CD4-positive, alpha-beta memory T cell (primary cell): ENCODE measurements at regions of chr19 and their contacts with region 1.

Region 1: DNA sequence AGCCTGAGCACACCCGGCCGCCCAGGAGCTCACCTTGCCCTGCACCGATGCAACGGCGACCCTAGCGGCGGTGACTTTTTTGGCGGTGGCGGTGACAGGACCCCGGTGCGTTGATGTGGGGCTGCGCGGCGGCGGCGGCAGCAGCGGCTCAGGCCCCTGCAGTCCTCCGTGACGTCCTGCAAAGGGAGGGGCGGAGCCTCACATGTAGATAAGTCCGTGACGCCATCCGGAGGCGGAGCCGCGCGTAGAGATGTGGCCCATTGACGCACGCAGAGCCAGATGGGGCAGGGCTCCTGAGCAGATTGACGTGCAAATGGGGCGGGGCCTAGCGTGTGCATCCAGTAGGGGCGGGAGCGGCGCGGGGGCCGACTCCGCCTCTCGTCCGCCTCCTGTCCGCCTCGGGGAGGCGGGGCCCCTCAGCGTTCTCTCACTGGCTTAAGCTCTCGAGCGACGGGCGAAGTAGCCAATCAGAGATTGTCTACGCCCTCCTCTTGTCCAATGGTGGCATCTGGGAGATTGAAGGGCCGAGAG is at the start of gene RAB3A:
- DNase-seq: peak; percentile 98 to 100 (median 100)
- H3K4me3 ChIP-seq: peak within 1 kb of the TSS; percentile 84 to 93
- H3K4me3 Mint-ChIP-seq: peak within 1 kb of the TSS; percentile 91 to 98 (median 96)
- H3K27ac ChIP-seq: peak within 1 kb of the TSS; percentile 63
- H3K27ac Mint-ChIP-seq: peak within 1 kb of the TSS; percentile 79 to 98 (median 98)
- H3K4me1 ChIP-seq: peaks cover 23% of the 10 kb centered on the region
- H3K4me1 Mint-ChIP-seq: peaks cover 13 to 33% (median 21%) of the 10 kb centered on the region in 4 donors
- H3K27me3 ChIP-seq: no peaks in the 10 kb centered on the region
- H3K27me3 Mint-ChIP-seq: peaks cover 0 to 1% of the 10 kb centered on the region in 2 donors
- total RNA-seq, gene RAB3A: 4.7 to 4.8 TPM

Region 2: GRCh38 chr19:18192673-18193387 is 11.1 kb before region 1 on chr19 and contains the start of gene MPV17L2:
- CTCF ChIA-PET with region 1: interaction called, 27 read pairs
- POLR2A ChIA-PET with region 1: interaction called, 78 read pairs
- intact Hi-C with region 1: loop called (anchors 1 kb)
- DNase-seq: peak; percentile 98 to 100 (median 99)
- H3K4me3 ChIP-seq: peak within 1 kb of the TSS; percentile 63 to 83
- H3K4me3 Mint-ChIP-seq: peak within 1 kb of the TSS; percentile 87 to 96 (median 92)
- H3K27ac ChIP-seq: peak within 1 kb of the TSS; percentile 73
- H3K27ac Mint-ChIP-seq: peak within 1 kb of the TSS; percentile 89 to 98 (median 96)
- H3K4me1 ChIP-seq: peaks cover 22% of the 10 kb centered on the region
- H3K4me1 Mint-ChIP-seq: peaks cover 11 to 26% (median 20%) of the 10 kb centered on the region in 4 donors
- H3K27me3 ChIP-seq: no peaks in the 10 kb centered on the region
- H3K27me3 Mint-ChIP-seq: no peaks in the 10 kb centered on the region
- total RNA-seq, gene MPV17L2: 7.6 to 7.8 TPM

Region 3: GRCh38 chr19:18224525-18225354 is 20.8 kb after region 1 on chr19:
- CTCF ChIA-PET with region 1: interaction called, 6 read pairs
- POLR2A ChIA-PET with region 1: interaction called, 17 read pairs
- intact Hi-C with region 1: no loop called
- DNase-seq: peak; percentile 79 to 83 (median 81)
- H3K4me3 ChIP-seq: peak overlapping the region; percentile 28 to 45
- H3K4me3 Mint-ChIP-seq: peak overlapping the region; percentile 83 to 91 (median 90)
- H3K27ac ChIP-seq: no peak overlapping the region
- H3K27ac Mint-ChIP-seq: peak overlapping the region in 3 of 7 donors; percentile 66 to 77 (median 74)
- H3K4me1 ChIP-seq: peaks cover 26% of the 10 kb centered on the region
- H3K4me1 Mint-ChIP-seq: peaks cover 12 to 30% (median 22%) of the 10 kb centered on the region in 4 donors
- H3K27me3 ChIP-seq: peaks cover 26% of the 10 kb centered on the region
- H3K27me3 Mint-ChIP-seq: peaks cover 48 to 55% of the 10 kb centered on the region in 2 donors

Region 4: DNA sequence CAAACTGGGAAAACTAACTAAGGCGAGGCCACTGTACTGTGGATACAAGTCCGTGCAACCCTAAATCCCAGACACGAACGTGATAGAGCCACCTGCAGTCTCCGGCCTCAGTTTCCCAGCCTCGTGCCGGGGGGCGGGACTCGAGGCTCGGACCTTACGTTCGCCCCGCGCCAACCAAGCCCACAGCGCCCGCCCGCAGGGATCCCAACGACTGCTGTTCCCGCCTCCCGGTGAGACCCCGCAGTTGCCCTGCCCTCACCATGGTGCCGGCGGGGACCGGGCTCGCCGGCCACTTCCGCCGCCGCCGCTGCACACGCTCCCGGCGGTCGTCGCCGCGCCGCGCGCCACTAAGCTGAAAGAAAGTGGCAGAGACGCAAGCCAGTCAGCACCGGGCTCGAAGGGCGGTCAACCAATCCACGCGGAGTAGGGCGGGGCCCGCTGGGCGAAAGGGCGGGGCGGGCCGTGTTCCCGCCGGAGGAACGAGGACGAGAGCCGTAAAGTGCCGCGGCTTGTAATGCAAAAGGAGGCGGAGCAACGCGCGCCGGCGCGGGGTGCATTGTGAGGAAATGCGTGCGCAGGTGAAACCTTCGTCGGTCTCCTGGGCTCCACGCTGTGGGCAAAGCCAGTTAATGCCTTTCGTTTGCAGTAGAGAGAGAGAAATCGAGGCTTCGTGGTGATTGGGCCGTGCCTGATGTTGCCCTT is 119.0 kb after region 1 on chr19 and contains the start of gene LSM4:
- CTCF ChIA-PET with region 1: interaction called, 15 read pairs
- POLR2A ChIA-PET with region 1: interaction called, 19 read pairs
- intact Hi-C with region 1: loop called (anchors 1 kb)
- DNase-seq: peak; percentile 99 to 100 (median 99)
- H3K4me3 ChIP-seq: peak within 1 kb of the TSS; percentile 61 to 81
- H3K4me3 Mint-ChIP-seq: peak within 1 kb of the TSS; percentile 75 to 88 (median 86)
- H3K27ac ChIP-seq: peak within 1 kb of the TSS; percentile 68
- H3K27ac Mint-ChIP-seq: peak within 1 kb of the TSS; percentile 86 to 98 (median 97)
- H3K4me1 ChIP-seq: peaks cover 59% of the 10 kb centered on the region
- H3K4me1 Mint-ChIP-seq: peaks cover 32 to 59% (median 45%) of the 10 kb centered on the region in 4 donors
- H3K27me3 ChIP-seq: no peaks in the 10 kb centered on the region
- H3K27me3 Mint-ChIP-seq: no peaks in the 10 kb centered on the region
- total RNA-seq, gene LSM4: 64.2 to 65.0 TPM